Common myeloid progenitor, CD34-positive (primary cell): ENCODE measurements at regions of chr12 and their contacts with region 1.

Region 1: DNA sequence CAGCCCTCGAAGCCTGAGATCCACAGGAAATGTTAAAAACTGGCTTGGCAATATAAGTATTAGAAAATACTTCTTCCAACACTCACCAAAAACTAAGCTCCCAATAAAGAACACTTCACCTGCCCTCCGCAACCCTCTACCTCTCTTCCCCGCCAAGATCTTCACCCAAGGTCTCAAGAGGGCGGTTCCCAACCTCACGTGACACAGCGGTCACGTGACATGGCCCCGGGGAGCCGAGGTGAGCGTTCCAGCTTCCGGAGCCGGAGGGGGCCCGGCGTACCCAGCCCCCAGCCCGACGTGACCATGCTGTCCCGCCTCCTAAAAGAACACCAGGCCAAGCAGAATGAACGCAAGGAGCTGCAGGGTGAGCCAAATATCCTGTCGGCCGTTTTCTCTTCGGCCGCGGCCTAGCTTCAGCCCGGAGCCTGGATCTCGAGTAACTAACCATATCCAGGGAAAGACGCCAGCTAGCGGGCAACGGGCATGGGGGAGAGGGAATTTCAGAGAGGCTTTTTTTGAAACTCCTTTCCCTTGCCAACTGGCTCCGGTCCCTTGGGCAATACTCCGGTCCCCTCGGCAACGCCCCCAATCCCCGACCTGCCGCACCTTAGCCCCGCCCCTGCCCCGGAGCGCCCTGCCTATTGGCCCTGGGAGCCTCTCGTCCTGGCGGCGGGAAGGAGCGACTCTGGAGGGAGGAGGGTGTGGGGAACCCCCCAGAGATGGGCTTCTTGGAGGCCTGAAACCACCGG is at the start of gene BLOC1S1:
- DNase-seq: peak; percentile 88 to 93 (median 91)
- H3K4me3 ChIP-seq: peak within 1 kb of the TSS; percentile 83 to 98 (median 92)
- H3K27ac ChIP-seq: peak within 1 kb of the TSS; percentile 87 to 89
- H3K4me1 ChIP-seq: peaks cover 3 to 27% (median 19%) of the 10 kb centered on the region in 4 experiments
- H3K27me3 ChIP-seq: peaks cover 0 to 2% (median 0%) of the 10 kb centered on the region in 5 experiments

Region 2: GRCh38 chr12:55467836-55468235 is 248.2 kb before region 1 on chr12:
- CTCF ChIA-PET with region 1: no interaction called
- POLR2A ChIA-PET with region 1: no interaction called
- DNase-seq: no peak
- H3K4me3 ChIP-seq: no peak overlapping the region
- H3K27ac ChIP-seq: no peak overlapping the region
- H3K4me1 ChIP-seq: no peaks in the 10 kb centered on the region
- H3K27me3 ChIP-seq: peaks cover 0 to 4% (median 0%) of the 10 kb centered on the region in 5 experiments

Region 3: DNA sequence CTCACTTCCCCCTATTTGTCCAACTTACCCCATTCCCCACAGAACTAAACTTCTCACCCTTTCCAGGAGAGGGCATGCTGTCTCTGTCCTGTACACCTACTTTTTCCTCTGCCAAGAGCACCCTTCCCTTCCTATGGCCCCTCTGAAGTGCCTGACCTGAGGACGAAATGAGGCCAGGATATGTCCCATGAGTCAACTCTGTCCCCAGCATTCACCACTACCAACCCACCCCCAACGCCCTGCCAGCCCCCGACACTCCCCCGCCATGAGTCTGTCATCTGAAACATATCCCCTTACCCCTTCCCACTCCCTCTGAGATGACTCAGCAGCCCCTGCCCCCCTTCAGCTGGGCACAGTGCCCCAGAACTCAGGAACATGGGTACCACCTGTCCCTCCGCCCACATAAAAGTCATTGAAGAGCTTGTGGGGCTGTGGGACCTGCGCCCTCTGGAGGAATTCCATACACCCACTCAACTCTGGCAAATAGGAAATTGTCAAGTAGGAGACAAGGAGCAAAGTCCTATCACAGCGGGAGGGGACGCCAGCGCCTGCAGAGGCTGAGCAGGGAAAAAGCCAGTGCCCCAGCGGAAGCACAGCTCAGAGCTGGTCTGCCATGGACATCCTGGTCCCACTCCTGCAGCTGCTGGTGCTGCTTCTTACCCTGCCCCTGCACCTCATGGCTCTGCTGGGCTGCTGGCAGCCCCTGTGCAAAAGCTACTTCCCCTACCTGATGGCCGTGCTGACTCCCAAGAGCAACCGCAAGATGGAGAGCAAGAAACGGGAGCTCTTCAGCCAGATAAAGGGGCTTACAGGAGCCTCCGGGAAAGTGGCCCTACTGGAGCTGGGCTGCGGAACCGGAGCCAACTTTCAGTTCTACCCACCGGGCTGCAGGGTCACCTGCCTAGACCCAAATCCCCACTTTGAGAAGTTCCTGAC is 34.6 kb before region 1 on chr12:
- CTCF ChIA-PET with region 1: interaction called, 11 read pairs
- POLR2A ChIA-PET with region 1: no interaction called
- DNase-seq: peak; percentile 62 to 71 (median 63)
- H3K4me3 ChIP-seq: peak overlapping the region; percentile 11 to 76 (median 47)
- H3K27ac ChIP-seq: no peak overlapping the region
- H3K4me1 ChIP-seq: peaks cover 0 to 20% (median 16%) of the 10 kb centered on the region in 4 experiments
- H3K27me3 ChIP-seq: no peaks in the 10 kb centered on the region

Region 4: DNA sequence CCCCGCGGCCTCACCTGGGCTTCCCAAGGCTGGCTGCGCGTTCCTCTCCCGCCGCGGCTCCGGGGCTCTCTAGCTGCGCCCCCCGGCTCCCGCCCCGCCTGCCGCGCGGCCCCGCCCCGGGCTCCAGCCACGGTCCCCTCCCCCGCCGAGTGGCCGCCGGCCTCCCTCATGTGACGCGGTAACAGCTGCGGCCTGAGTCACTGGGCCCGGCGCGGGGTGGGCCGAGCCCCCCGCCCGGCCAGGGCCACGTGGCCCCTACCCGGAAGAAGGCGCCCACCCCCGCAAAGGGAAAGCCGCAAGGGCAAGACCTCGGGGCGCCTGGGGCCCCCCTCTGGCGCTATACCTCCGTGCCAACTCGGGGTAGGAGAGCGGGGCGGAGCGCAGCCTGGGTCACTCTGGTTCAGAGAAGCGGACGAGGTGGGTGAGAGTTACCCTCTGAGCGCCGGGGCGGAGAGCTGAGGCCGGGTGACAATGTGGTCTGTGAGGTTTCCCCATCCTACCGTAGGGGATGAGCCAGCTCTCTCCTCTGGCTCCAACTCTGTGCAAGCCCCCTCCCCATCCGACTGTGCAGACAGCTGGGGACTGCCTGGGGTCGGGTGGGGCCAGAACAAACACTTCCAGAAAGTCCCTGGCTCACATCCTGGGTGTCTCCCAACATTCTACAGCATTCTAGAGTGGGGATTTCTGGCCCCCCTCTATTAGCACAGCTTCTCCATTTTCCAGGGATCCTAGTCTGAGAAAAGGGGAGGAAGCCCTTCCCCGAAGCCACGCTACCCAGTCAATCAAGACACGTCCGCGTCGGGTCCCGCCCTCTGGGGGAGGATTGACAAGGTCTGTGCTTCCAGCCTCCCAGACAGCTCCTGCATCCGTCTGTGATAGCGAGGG is 13.2 kb after region 1 on chr12 and contains the start of gene CD63:
- CTCF ChIA-PET with region 1: interaction called, 119 read pairs
- POLR2A ChIA-PET with region 1: interaction called, 4 read pairs
- DNase-seq: peak; percentile 77 to 91 (median 88)
- H3K4me3 ChIP-seq: peak within 1 kb of the TSS; percentile 57 to 88 (median 71)
- H3K27ac ChIP-seq: peak within 1 kb of the TSS; percentile 66 to 86
- H3K4me1 ChIP-seq: peaks cover 12 to 46% (median 34%) of the 10 kb centered on the region in 4 experiments
- H3K27me3 ChIP-seq: no peaks in the 10 kb centered on the region